Endothelial cell of umbilical vein (primary cell): ENCODE measurements at regions of chr14 and their contacts with region 1.

Region 1: DNA sequence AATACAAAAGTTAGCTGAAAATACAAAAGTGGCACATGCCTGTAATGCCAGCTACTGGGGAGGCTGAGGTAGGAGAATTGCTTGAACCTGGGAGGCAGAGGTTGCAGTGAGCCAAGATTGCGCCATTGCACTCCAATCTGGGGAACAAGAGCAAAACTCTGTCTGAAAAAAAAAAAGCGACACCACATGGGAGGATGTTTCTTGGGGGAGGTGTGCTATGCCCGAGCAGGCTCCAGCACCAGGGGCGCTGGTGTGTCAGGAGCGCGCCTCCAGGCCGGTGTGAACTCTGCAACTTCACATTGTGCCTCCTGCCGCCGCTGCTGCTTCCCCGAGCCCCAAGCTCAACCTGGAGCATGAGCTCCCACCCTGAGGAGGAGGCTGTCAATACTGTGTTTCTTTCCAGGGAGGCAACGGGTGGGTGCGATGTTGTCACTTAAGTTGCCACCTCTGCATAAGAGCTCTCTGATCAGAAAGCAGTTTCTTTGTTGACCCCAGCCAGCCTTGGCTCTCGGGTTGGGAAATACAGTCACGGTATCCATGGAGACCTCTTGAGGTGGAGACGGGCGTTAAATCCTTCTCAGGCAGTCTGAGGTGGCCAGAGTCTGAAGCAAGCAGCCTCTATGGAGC is 18.9 kb downstream of the DEGS2 start:
- DNase-seq: peak; percentile 81
- H3K4me3 ChIP-seq: no peak overlapping the region
- H3K27ac ChIP-seq: peak overlapping the region; percentile 83
- H3K4me1 ChIP-seq: peaks cover 31% of the 10 kb centered on the region
- H3K27me3 ChIP-seq: no peaks in the 10 kb centered on the region
- CTCF ChIP-seq: peak; percentile 57 to 84
- POLR2A ChIP-seq: no peak

Region 2: DNA sequence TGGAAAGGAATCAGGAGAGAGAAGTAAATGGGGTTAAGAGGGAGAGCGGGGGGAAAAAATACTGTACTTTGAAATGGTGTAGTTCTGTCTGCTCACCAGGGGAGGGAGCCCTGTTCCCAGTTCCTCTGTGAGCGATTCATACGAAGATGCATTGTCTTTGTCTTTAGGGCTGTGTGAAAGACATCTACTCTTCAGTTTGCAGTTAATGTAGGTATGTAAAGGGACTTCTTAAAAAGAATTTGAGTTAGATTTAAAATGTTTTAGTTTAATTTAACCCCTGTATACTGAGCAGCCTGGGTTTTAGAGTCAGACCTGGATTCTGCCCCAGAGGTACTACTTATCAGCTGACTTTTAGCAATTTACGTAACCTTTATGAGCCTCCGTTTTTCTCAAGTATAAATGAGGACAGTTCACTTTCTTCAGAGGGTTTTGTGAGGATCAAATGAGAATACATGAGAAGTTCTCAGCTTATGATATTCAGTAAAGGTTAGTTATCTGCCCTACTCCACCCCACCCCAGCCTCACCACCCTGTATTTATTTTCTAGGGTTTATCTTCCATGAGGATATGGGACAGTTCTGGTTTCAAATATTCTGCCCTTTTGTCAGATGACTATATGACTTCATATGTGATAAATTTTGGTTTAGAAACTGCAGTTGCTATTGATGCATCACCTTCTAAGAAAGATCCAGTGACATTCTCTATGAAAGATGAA is 157.9 kb before region 1 on chr14:
- CTCF ChIA-PET with region 1: interaction called, 15 read pairs
- POLR2A ChIA-PET with region 1: no interaction called
- dilution Hi-C with region 1: no loop called
- intact Hi-C with region 1: loop called (anchors 1 kb)
- DNase-seq: peak; percentile 73
- H3K4me3 ChIP-seq: no peak overlapping the region
- H3K27ac ChIP-seq: no peak overlapping the region
- H3K4me1 ChIP-seq: peaks cover 6% of the 10 kb centered on the region
- H3K27me3 ChIP-seq: no peaks in the 10 kb centered on the region
- CTCF ChIP-seq: peak; percentile 75 to 82
- POLR2A ChIP-seq: no peak

Region 3: DNA sequence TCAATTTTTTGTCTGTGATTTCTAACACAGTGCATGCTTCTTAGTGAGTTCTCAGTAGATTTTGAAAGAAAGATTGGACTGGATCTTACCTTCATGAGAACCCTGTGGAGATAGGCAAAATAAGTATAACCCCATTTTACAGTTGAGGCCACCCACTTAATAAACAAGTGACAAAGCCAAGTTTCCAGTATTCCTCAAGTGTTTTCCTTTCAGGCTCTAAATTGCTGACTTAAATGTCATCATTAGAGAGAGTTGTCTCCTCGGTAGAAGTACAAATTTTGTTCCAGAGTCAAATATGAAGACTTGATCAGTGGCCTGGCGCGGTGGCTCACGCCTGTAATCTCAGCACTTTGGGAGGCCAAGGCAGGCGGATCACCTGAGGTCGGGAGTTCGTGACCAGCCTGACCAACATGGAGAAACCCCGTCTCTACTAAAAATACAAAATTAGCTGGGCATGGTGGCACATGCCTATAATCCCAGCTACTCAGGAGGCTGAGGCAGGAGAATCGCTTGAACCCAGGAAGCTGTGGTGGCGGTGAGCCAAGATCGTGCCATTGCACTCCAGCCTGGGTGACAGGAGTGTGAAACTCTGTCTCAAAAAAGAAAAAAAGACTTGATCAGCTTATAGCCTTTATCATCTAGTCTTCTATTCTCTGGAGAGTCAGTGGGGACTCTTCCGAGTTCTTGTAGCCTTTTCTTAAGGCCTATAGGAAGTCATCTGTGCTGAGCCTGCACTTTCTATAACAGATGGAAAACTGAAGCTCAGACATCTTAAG is 76.1 kb before region 1 on chr14:
- CTCF ChIA-PET with region 1: no interaction called
- POLR2A ChIA-PET with region 1: no interaction called
- dilution Hi-C with region 1: no loop called
- intact Hi-C with region 1: no loop called
- DNase-seq: no peak
- H3K4me3 ChIP-seq: no peak overlapping the region
- H3K27ac ChIP-seq: no peak overlapping the region
- H3K4me1 ChIP-seq: peaks cover 13% of the 10 kb centered on the region
- H3K27me3 ChIP-seq: no peaks in the 10 kb centered on the region
- CTCF ChIP-seq: no peak
- POLR2A ChIP-seq: no peak

Region 4: GRCh38 chr14:100114109-100114765 is 26.3 kb before region 1 on chr14:
- CTCF ChIA-PET with region 1: interaction called, 22 read pairs
- POLR2A ChIA-PET with region 1: no interaction called
- dilution Hi-C with region 1: no loop called
- intact Hi-C with region 1: no loop called
- DNase-seq: no peak
- H3K4me3 ChIP-seq: no peak overlapping the region
- H3K27ac ChIP-seq: no peak overlapping the region
- H3K4me1 ChIP-seq: no peaks in the 10 kb centered on the region
- H3K27me3 ChIP-seq: no peaks in the 10 kb centered on the region
- CTCF ChIP-seq: no peak
- POLR2A ChIP-seq: no peak

Region 5: DNA sequence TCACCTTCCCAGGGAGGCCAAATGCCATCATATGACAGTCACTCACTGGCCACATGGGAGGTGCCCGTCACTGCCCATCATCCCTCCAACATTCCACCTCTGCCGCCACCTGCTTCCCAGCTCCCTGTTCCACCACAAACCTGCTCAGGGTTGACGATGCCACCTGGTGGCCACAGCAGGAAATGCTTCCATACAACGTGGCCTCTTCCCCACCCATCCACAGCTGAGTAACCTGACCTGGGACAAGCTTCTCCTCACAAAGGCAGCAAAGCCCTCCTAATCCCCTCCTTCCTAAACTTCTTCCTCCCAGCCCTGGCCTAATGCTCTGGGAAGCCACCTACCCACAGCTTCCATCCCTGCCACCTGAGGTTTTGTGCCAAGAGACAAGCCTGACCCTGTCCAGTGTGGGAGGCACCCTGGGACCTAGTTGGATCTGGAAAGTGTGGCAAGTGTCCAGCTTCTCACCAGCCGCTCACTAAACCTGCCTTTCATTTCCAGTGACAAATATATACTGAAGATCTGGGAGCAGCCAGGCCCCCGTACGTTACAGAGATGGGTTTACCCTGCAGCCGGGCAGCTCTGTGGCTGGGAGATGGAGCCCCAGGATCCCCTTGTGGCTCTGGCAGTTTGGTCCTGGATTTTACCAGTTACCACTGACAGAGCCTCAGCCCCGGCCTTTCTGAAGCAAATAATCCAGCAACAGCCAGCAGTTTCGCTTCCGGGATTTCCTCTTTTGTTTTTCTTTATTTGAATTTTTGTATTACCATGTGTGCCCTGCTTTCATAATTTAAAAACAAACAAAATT is 14.7 kb after region 1 on chr14:
- CTCF ChIA-PET with region 1: interaction called, 47 read pairs
- POLR2A ChIA-PET with region 1: interaction called, 6 read pairs
- dilution Hi-C with region 1: no loop called
- intact Hi-C with region 1: loop called (anchors 1 kb)
- DNase-seq: peak; percentile 20
- H3K4me3 ChIP-seq: no peak overlapping the region
- H3K27ac ChIP-seq: no peak overlapping the region
- H3K4me1 ChIP-seq: no peaks in the 10 kb centered on the region
- H3K27me3 ChIP-seq: peaks cover 7 to 12% of the 10 kb centered on the region in 2 experiments
- CTCF ChIP-seq: peak; percentile 49 to 63
- POLR2A ChIP-seq: no peak

Region 6: DNA sequence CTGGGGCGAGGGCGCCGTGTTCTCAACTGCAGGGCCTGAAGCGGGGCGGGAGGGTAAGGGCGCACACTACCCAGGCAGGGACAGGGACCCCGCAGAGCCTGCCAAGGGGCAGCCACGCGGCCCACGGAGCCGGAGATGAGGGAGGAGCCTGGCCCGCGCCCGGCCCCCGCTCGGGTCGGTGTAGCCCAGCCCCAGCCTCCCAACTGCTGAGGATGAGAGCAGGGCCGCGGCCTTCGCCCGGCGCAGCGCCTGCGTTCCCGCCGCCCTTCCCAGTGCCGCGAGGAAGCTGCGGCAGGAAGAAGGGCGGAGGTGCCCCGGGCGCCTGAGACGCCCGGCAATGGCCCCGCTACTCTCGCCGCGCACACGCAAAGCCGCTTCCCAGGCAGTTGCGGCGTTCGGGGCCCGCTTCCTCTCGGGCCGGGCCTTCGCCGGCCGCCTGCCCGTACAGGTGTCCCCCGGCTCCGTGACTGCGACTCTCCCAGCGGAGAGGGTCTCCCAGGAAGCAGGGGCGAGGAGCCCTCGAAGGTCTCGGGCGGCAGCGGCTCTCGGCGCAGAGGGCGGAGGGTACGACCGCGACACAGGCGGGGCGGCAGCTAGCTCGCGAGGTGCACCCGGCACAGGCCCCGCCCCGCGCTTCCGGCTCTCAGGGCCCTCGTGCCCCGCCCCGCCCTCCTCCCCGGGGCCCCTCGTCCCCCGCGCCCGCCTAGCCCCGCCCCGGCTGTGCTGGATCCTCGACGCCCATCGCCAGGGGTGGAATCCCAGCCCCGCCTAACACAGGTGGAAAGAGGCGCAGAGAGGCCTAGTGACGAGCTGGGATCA is 73.6 kb after region 1 on chr14:
- CTCF ChIA-PET with region 1: no interaction called
- POLR2A ChIA-PET with region 1: no interaction called
- dilution Hi-C with region 1: no loop called
- intact Hi-C with region 1: no loop called
- DNase-seq: peak; percentile 45
- H3K4me3 ChIP-seq: peak overlapping the region; percentile 28 to 59 (median 36)
- H3K27ac ChIP-seq: peak overlapping the region; percentile 8
- H3K4me1 ChIP-seq: no peaks in the 10 kb centered on the region
- H3K27me3 ChIP-seq: no peaks in the 10 kb centered on the region
- CTCF ChIP-seq: no peak
- POLR2A ChIP-seq: peak; percentile 40

Region 7: DNA sequence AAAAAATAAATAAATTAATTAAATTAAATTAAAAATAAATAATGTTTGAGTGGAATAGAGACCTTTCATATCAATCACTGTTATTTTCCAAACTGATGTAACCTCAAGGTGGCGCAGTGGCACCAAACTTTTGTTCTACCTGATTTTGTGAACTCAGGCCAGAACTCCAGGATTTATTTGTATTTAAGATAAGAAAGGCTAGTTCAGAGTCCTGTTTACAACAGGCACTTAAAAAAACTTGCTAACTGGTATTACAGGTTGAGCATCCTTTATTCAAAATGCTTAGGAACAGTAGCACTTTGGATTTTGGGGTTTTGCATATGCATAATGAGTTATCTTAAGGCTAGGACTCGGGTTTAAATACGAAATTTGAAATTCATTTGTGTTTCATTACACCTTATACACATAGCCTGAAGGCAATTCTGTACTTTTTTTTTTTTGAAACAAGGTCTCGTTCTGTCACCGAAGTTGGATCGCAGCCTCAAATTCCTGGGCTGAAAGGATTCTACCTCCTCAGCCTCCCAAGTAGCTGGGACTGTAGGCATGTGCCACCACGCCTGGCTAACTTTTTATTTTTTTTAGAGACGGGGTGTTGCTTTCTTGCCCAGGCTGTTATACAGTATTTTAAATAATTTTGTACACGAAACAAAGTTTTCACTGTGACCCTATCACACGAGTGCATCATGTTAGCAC is 130.8 kb after region 1 on chr14:
- CTCF ChIA-PET with region 1: no interaction called
- POLR2A ChIA-PET with region 1: no interaction called
- dilution Hi-C with region 1: no loop called
- intact Hi-C with region 1: no loop called
- DNase-seq: peak; percentile 61
- H3K4me3 ChIP-seq: no peak overlapping the region
- H3K27ac ChIP-seq: no peak overlapping the region
- H3K4me1 ChIP-seq: peaks cover 8% of the 10 kb centered on the region
- H3K27me3 ChIP-seq: no peaks in the 10 kb centered on the region
- CTCF ChIP-seq: peak; percentile 22 to 30
- POLR2A ChIP-seq: no peak